BJ (cell line): ENCODE measurements at regions of chr10 and their contacts with region 1.

Region 1: GRCh38 chr10:65735382-65735781 is 1190.5 kb upstream of the LRRTM3 start:
- DNase-seq: no peak
- H3K4me3 ChIP-seq: no peak overlapping the region
- H3K27me3 ChIP-seq: no peaks in the 10 kb centered on the region
- CTCF ChIP-seq: no peak

Region 2: GRCh38 chr10:65751218-65751617 is 15.8 kb after region 1 on chr10:
- CTCF ChIA-PET with region 1: no interaction called
- POLR2A ChIA-PET with region 1: interaction called, 24 read pairs
- DNase-seq: no peak
- H3K4me3 ChIP-seq: no peak overlapping the region
- H3K27me3 ChIP-seq: no peaks in the 10 kb centered on the region
- CTCF ChIP-seq: no peak